ENCODE measurements at regions of chr6 and their contacts with region 1.

Region 1: GRCh38 chr6:138109042-138109997 is 2.1 kb upstream of the PERP start:
- DNase-seq: peak; percentile 84

Region 2: DNA sequence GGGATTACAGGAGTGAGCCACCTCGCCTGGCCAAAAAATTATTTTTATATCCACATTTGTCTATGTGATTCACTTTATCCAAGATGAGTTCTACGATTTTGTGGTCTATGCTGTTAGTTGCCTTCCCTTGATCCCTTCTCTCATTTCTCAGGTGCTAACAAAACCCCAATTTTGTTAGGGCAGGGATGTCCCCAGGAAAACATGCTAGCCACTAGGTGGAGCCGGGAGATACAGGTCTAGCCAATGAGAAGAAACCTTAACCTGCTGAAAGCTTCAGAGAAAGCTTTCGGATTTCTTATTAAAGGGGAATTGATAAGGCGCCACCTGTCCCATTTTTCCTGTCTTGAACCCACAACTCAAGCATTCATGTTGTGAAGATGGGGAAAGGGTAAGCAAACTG is 447.7 kb before region 1 on chr6:
- in situ Hi-C with region 1: no loop called
- DNase-seq: no peak

Region 3: GRCh38 chr6:138001750-138002349 is 107.5 kb before region 1 on chr6:
- in situ Hi-C with region 1: loop called (anchors 10 kb)
- DNase-seq: peak; percentile 68

Region 4: GRCh38 chr6:138336221-138336620 is 226.9 kb after region 1 on chr6:
- in situ Hi-C with region 1: no loop called
- DNase-seq: no peak

Region 5: DNA sequence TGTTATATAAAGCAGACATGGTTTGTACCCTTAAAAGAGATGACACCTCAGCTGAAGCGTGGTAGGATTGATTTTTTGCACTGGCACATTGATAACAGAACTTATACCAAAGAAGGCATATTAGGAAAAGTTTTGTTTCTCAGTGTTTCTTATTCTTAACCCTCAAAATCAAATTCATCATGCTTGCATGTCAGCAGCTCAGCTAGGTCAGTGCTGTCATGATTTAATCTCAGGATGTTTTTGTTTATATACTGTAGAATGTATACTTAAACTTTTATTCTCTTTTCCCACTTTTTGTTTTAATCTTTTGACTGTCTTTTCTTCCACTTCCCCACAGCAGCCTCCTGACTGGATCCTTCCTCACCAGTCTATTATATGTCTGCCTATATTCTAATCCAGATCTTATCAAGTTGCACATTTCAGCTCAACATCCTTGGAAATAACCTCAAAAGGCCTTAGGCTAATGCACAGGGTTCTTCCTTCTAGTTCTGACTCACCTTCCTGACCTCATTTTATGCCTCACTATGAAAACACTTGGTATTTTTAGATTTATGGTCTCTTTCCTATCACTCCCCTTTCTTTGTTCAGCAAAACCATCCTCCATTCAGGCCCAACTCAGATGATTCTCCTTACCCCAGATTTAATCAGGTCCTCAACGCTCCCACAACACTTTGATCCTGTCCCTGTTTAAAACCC is 301.8 kb after region 1 on chr6:
- in situ Hi-C with region 1: no loop called
- DNase-seq: peak; percentile 82

Region 6: DNA sequence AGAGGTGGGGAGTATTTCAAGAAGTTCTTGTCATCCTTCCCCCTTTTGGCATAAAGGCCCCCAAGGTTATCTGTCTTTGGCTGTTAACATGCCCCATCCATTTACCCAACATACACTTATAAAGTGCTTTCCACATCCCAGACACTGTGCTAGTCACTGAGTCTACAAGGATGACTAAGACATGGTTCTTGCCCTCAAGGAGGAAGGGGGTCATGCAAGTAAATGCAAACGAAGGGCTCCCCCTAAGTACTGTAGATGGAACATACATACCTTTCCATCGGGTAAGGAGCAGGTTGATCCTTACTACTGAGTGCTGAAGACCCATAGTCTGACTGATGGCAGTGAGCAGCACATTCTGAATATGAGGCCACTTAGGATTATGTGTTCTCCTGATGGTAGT is 1063.9 kb after region 1 on chr6:
- in situ Hi-C with region 1: no loop called
- DNase-seq: no peak